CD14-positive monocyte (primary cell): ENCODE measurements at regions of chr1 and their contacts with region 1.

Region 1: DNA sequence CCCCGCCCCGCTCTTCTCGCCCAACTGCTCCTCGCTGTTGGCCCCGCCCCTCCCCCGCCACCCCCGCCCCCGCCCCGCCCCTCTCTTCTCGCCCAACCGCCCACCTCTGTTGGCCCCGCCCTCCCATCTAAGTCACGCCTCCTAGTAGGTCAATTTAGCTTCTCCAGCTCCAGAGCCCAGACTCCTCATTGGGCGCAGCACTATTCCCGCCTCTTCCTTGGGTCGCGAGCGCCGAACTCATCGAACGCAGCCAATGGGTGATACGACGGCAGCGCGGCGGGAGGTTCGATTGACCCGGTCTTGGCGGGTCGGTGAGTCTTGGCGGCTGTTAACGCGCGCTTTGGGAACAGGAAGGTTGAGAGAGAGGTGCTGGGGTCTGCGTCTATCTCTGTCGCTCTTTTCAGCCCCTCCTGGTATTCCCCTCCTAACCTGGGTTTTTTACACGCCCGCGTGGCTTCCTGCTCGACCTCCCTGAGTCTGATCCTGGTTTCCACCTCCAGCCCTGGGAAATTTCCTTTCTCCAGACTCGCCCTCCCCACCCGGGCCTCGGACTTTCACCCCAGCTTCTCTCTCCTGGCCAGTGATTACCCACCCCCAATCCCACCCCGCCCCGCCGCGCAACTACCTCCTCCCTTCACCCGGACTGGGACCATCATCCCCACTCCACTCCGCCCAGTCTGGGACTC is at the start of gene RAD54L:
- DNase-seq: peak; percentile 96 to 98 (median 97)
- H3K4me3 ChIP-seq: peak within 1 kb of the TSS; percentile 81 to 97 (median 89)
- H3K4me3 Mint-ChIP-seq: peak within 1 kb of the TSS; percentile 97 to 99
- H3K27ac ChIP-seq: peak within 1 kb of the TSS; percentile 20 to 74
- H3K27ac Mint-ChIP-seq: peak within 1 kb of the TSS; percentile 62 to 94 (median 87)
- H3K4me1 ChIP-seq: peaks cover 19 to 20% of the 10 kb centered on the region in 2 donors
- H3K4me1 Mint-ChIP-seq: peaks cover 27% of the 10 kb centered on the region
- H3K27me3 ChIP-seq: no peaks in the 10 kb centered on the region
- H3K27me3 Mint-ChIP-seq: peaks cover 0 to 3% (median 0%) of the 10 kb centered on the region in 3 donors
- CTCF ChIP-seq: no peak
- polyA plus RNA-seq, gene RAD54L: 0.13 TPM in 1 of 3 donors, not detected in the others

Region 2: GRCh38 chr1:46303038-46303871 is 55.7 kb after region 1 on chr1 and contains the starts of genes LRRC41 and UQCRH:
- intact Hi-C with region 1: loop called (anchors 2 to 5 kb)
- DNase-seq: peak; percentile 94 to 95 (median 95)
- H3K4me3 ChIP-seq: peak within 1 kb of the TSS; percentile 97 to 99 (median 99)
- H3K4me3 Mint-ChIP-seq: peak within 1 kb of the TSS; percentile 97 to 99
- H3K27ac ChIP-seq: peak within 1 kb of the TSS; percentile 88 to 94
- H3K27ac Mint-ChIP-seq: peak within 1 kb of the TSS; percentile 94 to 99 (median 95)
- H3K4me1 ChIP-seq: peaks cover 38 to 53% of the 10 kb centered on the region in 2 donors
- H3K4me1 Mint-ChIP-seq: peaks cover 50% of the 10 kb centered on the region
- H3K27me3 ChIP-seq: no peaks in the 10 kb centered on the region
- H3K27me3 Mint-ChIP-seq: peaks cover 0 to 2% (median 0%) of the 10 kb centered on the region in 3 donors
- CTCF ChIP-seq: no peak
- polyA plus RNA-seq, gene LRRC41: 22.9 to 50.9 (median 47.4) TPM
- polyA plus RNA-seq, gene UQCRH: 261 to 341 (median 266) TPM

Region 3: GRCh38 chr1:46352363-46352762 is 104.8 kb after region 1 on chr1:
- intact Hi-C with region 1: loop called in 1 of 2 experiments (anchors 5 kb)
- DNase-seq: no peak
- H3K4me3 ChIP-seq: no peak overlapping the region
- H3K4me3 Mint-ChIP-seq: no peak overlapping the region
- H3K27ac ChIP-seq: no peak overlapping the region
- H3K27ac Mint-ChIP-seq: peak overlapping the region in 2 of 7 donors; percentile 10 to 41
- H3K4me1 ChIP-seq: peaks cover 10 to 15% of the 10 kb centered on the region in 2 donors
- H3K4me1 Mint-ChIP-seq: peaks cover 21% of the 10 kb centered on the region
- H3K27me3 ChIP-seq: no peaks in the 10 kb centered on the region
- H3K27me3 Mint-ChIP-seq: no peaks in the 10 kb centered on the region
- CTCF ChIP-seq: no peak